ENCODE measurements at regions of chr12 and their contacts with region 1.

Region 1: DNA sequence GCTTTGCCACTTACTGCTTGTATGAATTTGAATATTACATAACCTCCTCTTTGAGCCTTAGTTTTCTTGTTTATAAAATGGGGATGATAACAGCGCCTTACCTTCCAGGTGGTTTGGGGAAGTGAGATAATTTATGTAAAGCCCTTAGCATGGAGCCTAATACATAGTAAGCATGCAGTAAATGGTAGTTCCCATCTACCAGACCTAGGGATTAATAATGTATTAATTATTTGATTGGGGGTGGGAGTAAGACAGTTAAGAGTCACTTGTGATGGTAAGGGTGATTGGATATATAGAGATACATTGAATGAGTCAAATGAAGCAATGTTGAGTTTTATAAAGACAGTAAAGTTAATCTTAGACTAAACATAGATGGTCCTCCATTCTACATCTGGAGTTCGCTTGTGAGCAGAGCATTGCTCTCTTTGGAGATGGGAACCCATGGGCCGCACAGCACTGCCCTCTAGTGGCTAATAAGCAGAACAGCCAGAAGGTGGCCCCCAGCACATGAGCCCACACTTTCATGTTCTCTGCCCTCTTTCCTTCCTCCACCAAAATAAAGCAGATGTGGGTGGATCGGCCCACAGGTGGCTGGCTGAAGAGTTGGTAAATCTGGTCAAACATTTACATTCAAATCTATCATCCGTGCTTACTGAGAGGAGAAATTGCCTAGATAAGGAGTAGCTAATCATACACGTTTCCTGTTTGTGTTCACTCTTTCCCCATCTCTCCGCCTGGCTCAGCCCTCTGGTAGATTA is 26.5 kb upstream of the TAMALIN start:
- DNase-seq: peak; percentile 85
- H3K4me3 ChIP-seq: peak overlapping the region in 1 of 2 experiments; percentile 26; a peak in 1 of 4 replicates
- H3K27ac ChIP-seq: peak overlapping the region in 1 of 2 experiments; percentile 8; a peak in 1 of 4 replicates
- H3K4me1 ChIP-seq: peaks cover 0 to under 1% of the 10 kb centered on the region in 2 experiments; a peak in 1 of 4 replicates
- H3K27me3 ChIP-seq: no peaks in the 10 kb centered on the region
- CTCF ChIP-seq: peak; percentile 97
- EP300 ChIP-seq: no peak
- RAD21 ChIP-seq: peak; percentile 97

Region 2: DNA sequence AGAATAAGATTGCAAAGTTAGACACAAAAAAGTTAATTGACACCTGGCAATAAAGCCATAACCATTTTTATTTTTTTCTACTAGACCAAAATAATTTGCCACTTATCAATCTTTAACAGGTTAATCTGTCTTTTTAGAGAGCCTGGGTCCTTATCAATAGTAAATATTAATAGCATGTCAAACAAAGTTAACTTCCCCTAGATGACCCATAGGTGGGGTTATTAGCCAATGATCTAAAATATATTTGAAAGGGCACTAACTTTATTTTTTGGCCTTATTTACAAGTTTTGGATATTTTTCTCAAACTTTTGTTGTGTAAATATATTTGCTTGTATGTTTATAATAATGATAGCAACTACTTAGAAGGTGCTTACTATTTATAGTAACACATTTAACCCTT is 88.4 kb before region 1 on chr12:
- CTCF ChIA-PET with region 1: interaction called, 141 read pairs
- POLR2A ChIA-PET with region 1: no interaction called
- DNase-seq: no peak
- H3K4me3 ChIP-seq: no peak overlapping the region
- H3K27ac ChIP-seq: no peak overlapping the region
- H3K4me1 ChIP-seq: peaks cover 0 to 9% of the 10 kb centered on the region in 2 experiments; a peak in 1 of 4 replicates
- H3K27me3 ChIP-seq: no peaks in the 10 kb centered on the region
- CTCF ChIP-seq: peak; percentile 61
- EP300 ChIP-seq: no peak
- RAD21 ChIP-seq: peak; percentile 68

Region 3: DNA sequence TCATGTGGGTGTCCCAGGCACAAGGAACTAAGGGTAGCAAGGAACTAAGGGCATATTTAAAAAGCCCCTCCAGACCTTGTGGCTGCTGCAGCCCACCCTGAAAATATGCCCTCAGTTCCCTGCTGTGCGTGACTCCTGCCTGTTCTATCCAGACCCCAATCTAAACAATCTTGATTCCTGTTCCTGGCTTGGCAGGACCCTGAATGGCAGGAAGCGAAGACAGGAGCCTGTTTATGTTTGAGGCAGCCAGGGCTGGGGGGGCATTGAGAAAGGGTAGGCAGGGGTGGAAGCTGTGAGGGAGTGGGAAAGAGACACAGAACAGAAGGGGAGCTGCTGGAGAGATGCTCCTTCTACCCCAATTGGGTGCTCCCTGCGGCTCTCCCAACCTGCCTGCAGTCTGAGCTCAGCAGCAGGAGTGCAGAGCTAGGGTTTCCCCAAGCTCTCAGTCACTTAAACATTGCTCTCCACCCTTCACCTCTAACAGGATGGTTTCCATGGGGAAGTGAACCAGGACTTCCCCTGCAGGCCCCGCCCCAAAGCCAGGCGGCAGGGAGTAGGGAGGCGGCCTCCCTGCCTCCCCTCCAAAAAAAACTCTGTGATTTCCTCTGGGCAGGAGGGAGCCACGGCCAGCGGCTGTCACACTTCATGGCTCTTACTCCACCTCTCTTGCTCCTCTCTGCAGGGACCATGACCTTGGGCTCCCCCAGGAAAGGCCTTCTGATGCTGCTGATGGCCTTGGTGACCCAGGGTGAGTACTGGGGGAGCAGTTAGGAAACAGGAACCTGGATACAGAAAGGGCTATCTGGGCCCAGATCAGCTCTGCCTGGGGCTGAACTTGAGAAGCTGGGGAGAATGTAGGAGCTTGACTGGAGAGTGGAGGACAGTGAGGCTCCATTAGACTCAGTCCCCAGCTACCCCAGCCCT is 68.2 kb before region 1 on chr12:
- CTCF ChIA-PET with region 1: interaction called, 23 read pairs
- POLR2A ChIA-PET with region 1: no interaction called
- DNase-seq: peak; percentile 77
- H3K4me3 ChIP-seq: no peak overlapping the region
- H3K27ac ChIP-seq: peak overlapping the region in 1 of 2 experiments; percentile 84; a peak in 2 of 4 replicates
- H3K4me1 ChIP-seq: peaks cover 0 to 64% of the 10 kb centered on the region in 2 experiments; a peak in 2 of 4 replicates
- H3K27me3 ChIP-seq: no peaks in the 10 kb centered on the region
- CTCF ChIP-seq: no peak
- EP300 ChIP-seq: peak in 1 of 2 experiments; percentile 16; a peak in 1 of 4 replicates
- RAD21 ChIP-seq: no peak

Measured in SK-N-SH (cell line).